ENCODE measurements at regions of chr7 and their contacts with region 1.

Region 1: DNA sequence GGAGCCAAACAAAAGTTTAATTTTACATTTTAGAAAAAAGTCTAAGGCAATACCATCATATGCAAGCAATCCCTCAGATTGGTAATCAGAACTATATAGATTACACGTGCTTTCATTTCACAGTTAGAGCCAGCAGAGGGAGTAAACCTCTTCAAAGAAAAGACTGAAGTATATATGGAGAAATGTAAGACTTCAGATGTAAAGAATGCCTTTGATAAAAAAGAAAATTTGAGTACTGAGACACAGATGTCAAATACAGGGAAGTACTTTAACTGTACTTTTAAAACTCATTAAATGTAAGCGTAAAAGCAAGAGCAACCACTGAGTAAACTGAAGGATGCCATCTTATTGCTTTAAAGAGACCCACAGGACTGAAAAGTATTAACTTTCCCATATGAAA is 101.4 kb upstream of the FAM133B start:
- DNase-seq: no peak
- H3K4me3 Mint-ChIP-seq: no peak overlapping the region
- H3K27ac Mint-ChIP-seq: no peak overlapping the region
- H3K4me1 Mint-ChIP-seq: peaks cover 28% of the 10 kb centered on the region
- H3K27me3 Mint-ChIP-seq: no peaks in the 10 kb centered on the region
- CTCF ChIP-seq: peak; percentile 17

Region 2: DNA sequence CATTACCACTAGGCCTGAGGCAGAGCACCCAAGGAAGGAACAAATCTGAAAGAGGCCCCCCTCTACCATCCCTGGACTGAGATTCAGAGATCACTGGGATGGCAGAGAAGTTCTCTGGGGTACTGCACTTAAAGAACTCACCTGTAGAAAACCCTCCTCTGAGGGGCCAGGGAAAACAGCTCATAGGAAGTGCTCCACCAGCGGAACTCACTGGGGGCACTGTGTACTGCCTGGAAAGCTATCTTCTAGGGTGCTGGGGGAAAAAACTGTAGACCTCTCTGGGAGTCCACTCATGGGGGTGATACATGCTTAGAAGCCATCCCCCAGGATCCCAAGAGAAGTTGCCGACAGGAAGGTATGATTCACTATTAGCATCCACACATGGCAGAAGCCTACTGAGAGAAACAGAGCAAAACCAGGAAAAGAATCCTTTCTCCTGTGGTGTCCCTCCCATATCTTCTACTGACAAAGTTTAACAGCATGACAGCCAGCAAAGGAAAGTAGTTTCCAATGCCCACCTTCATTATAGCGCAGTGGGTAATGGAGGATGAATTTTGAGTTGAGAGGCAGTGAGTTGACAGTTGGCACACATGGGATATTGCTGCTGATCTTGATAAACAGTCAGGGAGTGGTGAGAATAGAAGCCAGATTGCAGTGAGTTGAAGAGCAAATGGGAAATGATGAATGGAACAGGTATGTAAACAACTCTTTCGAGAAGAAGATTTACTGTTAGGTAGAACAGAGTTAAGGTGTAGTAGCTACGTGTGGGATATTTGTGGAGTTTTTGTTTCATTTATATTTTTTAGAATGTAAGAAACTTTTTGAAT is 424.9 kb before region 1 on chr7:
- CTCF ChIA-PET with region 1: no interaction called
- intact Hi-C with region 1: no loop called
- DNase-seq: no peak
- H3K4me3 Mint-ChIP-seq: no peak overlapping the region
- H3K27ac Mint-ChIP-seq: no peak overlapping the region
- H3K4me1 Mint-ChIP-seq: no peaks in the 10 kb centered on the region
- H3K27me3 Mint-ChIP-seq: no peaks in the 10 kb centered on the region
- CTCF ChIP-seq: no peak

Region 3: GRCh38 chr7:92621026-92621540 is 70.5 kb before region 1 on chr7:
- CTCF ChIA-PET with region 1: no interaction called
- intact Hi-C with region 1: loop called (anchors 5 kb)
- DNase-seq: peak; percentile 69
- H3K4me3 Mint-ChIP-seq: no peak overlapping the region
- H3K27ac Mint-ChIP-seq: no peak overlapping the region
- H3K4me1 Mint-ChIP-seq: peaks cover 28% of the 10 kb centered on the region
- H3K27me3 Mint-ChIP-seq: no peaks in the 10 kb centered on the region
- CTCF ChIP-seq: peak; percentile 30

Region 4: GRCh38 chr7:92747041-92747835 is 55.7 kb after region 1 on chr7:
- CTCF ChIA-PET with region 1: interaction called, 6 read pairs
- intact Hi-C with region 1: loop called (anchors 5 kb)
- DNase-seq: no peak
- H3K4me3 Mint-ChIP-seq: peak overlapping the region; percentile 56
- H3K27ac Mint-ChIP-seq: peak overlapping the region; percentile 75
- H3K4me1 Mint-ChIP-seq: peaks cover 50% of the 10 kb centered on the region
- H3K27me3 Mint-ChIP-seq: no peaks in the 10 kb centered on the region
- CTCF ChIP-seq: no peak

Region 5: GRCh38 chr7:93055543-93056107 is 364.0 kb after region 1 on chr7:
- CTCF ChIA-PET with region 1: no interaction called
- intact Hi-C with region 1: loop called (anchors 5 kb)
- DNase-seq: no peak
- H3K4me3 Mint-ChIP-seq: no peak overlapping the region
- H3K27ac Mint-ChIP-seq: no peak overlapping the region
- H3K4me1 Mint-ChIP-seq: peaks cover 9% of the 10 kb centered on the region
- H3K27me3 Mint-ChIP-seq: no peaks in the 10 kb centered on the region
- CTCF ChIP-seq: no peak

Region 6: GRCh38 chr7:93530701-93531100 is 839.1 kb after region 1 on chr7:
- CTCF ChIA-PET with region 1: no interaction called
- intact Hi-C with region 1: no loop called
- DNase-seq: no peak
- H3K4me3 Mint-ChIP-seq: no peak overlapping the region
- H3K27ac Mint-ChIP-seq: no peak overlapping the region
- H3K4me1 Mint-ChIP-seq: no peaks in the 10 kb centered on the region
- H3K27me3 Mint-ChIP-seq: no peaks in the 10 kb centered on the region
- CTCF ChIP-seq: no peak